HEK293 (cell line): ENCODE measurements at regions of chr2 and their contacts with region 1.

Region 1: GRCh38 chr2:179422037-179422643 is 157.5 kb upstream of the SESTD1 start:
- H3K4me3 ChIP-seq: no peak overlapping the region
- H3K27ac ChIP-seq: no peak overlapping the region
- H3K4me1 ChIP-seq: no peaks in the 10 kb centered on the region
- CTCF ChIP-seq: peak; percentile 48

Region 2: GRCh38 chr2:179410552-179411356 is 11.4 kb before region 1 on chr2:
- CTCF ChIA-PET with region 1: interaction called, 12 read pairs
- POLR2A ChIA-PET with region 1: no interaction called
- H3K4me3 ChIP-seq: no peak overlapping the region
- H3K27ac ChIP-seq: no peak overlapping the region
- H3K4me1 ChIP-seq: no peaks in the 10 kb centered on the region; the same call in 1 of the 2 replicates
- CTCF ChIP-seq: peak; percentile 62

Region 3: DNA sequence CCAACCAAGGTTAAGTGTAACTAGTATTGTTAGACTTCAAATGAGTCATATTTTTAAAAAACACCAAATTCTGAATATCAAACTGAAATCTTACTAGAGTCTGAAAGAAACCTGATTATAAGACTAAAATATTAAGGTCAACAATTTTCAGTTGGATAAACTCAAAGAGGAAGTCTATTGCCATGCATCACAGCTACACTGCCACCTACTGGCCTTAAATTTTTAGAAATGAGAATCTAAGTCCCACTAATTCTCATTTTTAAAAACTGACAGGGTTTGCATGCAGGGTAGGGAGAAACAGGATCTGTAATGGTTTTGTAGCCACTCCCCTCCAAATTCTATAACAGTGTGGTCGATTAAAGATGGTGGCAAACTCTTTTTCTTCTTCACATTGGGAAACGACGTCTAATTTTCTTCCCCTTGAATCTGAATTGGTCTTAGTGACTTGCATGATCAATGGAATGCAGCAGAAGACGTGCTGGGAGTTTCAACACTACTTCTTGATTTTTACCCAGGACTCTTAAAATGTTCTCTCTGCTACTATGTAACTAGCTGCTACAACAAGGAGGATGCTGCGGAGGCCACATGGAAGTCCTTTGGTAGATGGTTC is 18.6 kb after region 1 on chr2:
- CTCF ChIA-PET with region 1: interaction called, 42 read pairs
- POLR2A ChIA-PET with region 1: no interaction called
- H3K4me3 ChIP-seq: no peak overlapping the region
- H3K27ac ChIP-seq: no peak overlapping the region
- H3K4me1 ChIP-seq: no peaks in the 10 kb centered on the region
- CTCF ChIP-seq: no peak

Region 4: DNA sequence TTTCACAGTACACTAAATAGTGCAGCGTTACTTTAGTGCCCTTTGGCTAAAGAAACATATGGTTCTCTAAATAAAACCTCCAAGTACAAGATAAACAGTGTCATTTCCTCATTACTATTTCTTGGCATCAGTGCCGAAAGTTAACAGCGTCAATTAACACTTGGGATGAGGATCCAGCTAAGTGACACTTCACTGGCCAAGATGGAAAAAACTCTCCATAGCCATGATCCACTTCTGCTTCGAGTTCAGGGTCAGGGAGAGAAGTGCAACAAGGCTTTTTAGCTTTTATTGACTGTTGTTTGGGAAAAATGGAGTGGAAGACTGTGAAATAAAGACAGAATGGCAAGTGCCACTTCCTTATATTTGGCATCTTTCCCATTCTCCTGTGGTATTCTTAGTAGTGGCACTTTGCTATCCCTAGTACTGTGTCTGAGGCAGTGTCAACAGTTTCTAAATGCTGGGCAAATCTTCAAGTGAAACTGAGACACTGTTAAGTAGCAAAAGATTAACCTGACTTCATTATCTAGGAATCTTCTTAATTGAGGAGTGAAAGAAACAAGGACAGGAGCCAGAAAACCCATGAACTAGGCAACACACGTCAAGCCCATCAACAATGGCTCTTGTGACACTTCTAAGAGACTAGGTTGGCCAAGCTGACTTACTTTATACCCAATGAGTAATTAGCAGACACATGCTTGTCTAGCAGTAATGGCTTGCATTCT is 65.0 kb after region 1 on chr2:
- CTCF ChIA-PET with region 1: no interaction called
- POLR2A ChIA-PET with region 1: no interaction called
- H3K4me3 ChIP-seq: no peak overlapping the region
- H3K27ac ChIP-seq: no peak overlapping the region
- H3K4me1 ChIP-seq: peaks cover 5% of the 10 kb centered on the region
- CTCF ChIP-seq: no peak

Region 5: DNA sequence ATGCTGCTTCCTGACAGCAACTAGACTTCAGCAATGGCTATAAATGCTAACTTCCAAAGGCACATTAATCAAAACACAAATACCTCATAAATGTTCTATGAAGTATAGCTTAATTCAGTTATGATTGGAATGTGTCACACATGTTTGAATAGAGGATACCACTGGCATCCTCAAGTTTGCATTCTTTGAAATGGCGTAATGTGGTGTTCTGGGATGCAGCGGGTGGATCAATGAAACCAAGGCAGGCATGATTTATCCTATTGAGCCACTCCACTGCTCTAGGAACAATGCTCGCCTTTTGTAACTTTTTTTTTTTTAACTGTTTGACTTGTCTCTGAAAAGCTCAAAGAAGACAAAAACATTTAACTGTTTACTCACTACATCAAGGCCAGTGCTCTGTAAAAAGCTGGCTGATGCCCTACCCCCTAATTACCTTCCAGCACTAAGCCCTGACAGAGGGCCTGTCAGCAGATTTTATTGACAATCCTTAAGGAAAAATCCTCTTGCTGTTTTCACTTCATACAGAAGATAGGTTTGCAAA is 121.3 kb after region 1 on chr2:
- CTCF ChIA-PET with region 1: no interaction called
- POLR2A ChIA-PET with region 1: no interaction called
- H3K4me3 ChIP-seq: no peak overlapping the region
- H3K27ac ChIP-seq: no peak overlapping the region
- H3K4me1 ChIP-seq: no peaks in the 10 kb centered on the region
- CTCF ChIP-seq: no peak

Region 6: DNA sequence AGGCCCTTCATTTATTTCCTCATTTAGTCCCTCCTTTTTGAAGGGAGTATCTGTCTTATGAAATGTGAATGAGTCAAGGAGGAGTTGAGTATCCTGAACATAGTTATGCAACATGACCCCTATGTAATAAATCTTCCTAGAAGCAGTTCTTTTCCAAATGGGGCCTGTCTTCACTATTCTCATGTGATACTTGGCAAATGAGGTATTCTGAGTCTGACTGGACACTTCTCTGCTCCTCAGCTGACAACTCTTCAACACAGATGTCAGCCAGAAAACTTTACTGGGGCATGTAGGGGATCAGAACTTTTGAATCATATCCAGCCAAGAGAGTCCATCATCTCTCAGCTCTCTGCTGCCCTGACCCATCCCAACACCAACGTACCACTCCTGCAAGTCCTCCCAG is 147.7 kb after region 1 on chr2:
- CTCF ChIA-PET with region 1: no interaction called
- POLR2A ChIA-PET with region 1: no interaction called
- H3K4me3 ChIP-seq: no peak overlapping the region
- H3K27ac ChIP-seq: no peak overlapping the region
- H3K4me1 ChIP-seq: peaks cover 17% of the 10 kb centered on the region
- CTCF ChIP-seq: no peak

Region 7: DNA sequence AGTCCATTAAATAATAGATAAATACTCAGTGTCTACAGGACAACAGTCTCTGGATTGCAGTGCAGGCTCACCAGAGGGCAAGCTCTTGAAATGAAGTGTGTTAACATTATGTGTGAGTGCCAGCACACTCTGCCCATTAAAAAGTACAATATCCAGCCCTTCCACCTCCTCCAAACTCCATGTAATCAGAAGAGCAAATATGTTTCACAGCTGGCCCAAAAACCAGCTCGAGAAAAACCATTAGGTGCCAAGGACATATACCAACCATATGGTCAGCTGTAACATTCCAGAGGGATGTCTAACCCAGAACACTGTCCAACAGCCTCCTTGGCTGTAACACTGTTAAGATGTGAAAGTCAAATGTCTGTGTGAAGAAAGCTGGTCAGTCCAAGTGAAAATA is 327.1 kb after region 1 on chr2:
- CTCF ChIA-PET with region 1: interaction called, 14 read pairs
- POLR2A ChIA-PET with region 1: no interaction called
- H3K4me3 ChIP-seq: no peak overlapping the region
- H3K27ac ChIP-seq: no peak overlapping the region
- H3K4me1 ChIP-seq: no peaks in the 10 kb centered on the region
- CTCF ChIP-seq: no peak